Activated naive CD4-positive, alpha-beta T cell treated with anti-CD3 and anti-CD28 coated beads for 36 hours (primary cell): ENCODE measurements at regions of chr1 and their contacts with region 1.

Region 1: GRCh38 chr1:196660852-196661251 is 9.0 kb downstream of the CFH start:
- DNase-seq: no peak
- H3K4me3 Mint-ChIP-seq: no peak overlapping the region
- H3K27ac Mint-ChIP-seq: no peak overlapping the region
- H3K4me1 Mint-ChIP-seq: no peaks in the 10 kb centered on the region
- H3K27me3 Mint-ChIP-seq: no peaks in the 10 kb centered on the region

Region 2: GRCh38 chr1:196148367-196148970 is 512.4 kb before region 1 on chr1:
- CTCF ChIA-PET with region 1: interaction called, 18 read pairs
- intact Hi-C with region 1: loop called (anchors 1 kb)
- DNase-seq: no peak
- H3K4me3 Mint-ChIP-seq: no peak overlapping the region
- H3K27ac Mint-ChIP-seq: no peak overlapping the region
- H3K4me1 Mint-ChIP-seq: no peaks in the 10 kb centered on the region
- H3K27me3 Mint-ChIP-seq: no peaks in the 10 kb centered on the region

Region 3: GRCh38 chr1:196317535-196318522 is 343.0 kb before region 1 on chr1:
- CTCF ChIA-PET with region 1: no interaction called
- intact Hi-C with region 1: loop called (anchors 2 kb)
- DNase-seq: peak; percentile 4
- H3K4me3 Mint-ChIP-seq: no peak overlapping the region
- H3K27ac Mint-ChIP-seq: no peak overlapping the region
- H3K4me1 Mint-ChIP-seq: no peaks in the 10 kb centered on the region
- H3K27me3 Mint-ChIP-seq: no peaks in the 10 kb centered on the region

Region 4: GRCh38 chr1:196355206-196355786 is 305.6 kb before region 1 on chr1:
- CTCF ChIA-PET with region 1: no interaction called
- intact Hi-C with region 1: loop called (anchors 1 kb)
- DNase-seq: no peak
- H3K4me3 Mint-ChIP-seq: no peak overlapping the region
- H3K27ac Mint-ChIP-seq: no peak overlapping the region
- H3K4me1 Mint-ChIP-seq: no peaks in the 10 kb centered on the region
- H3K27me3 Mint-ChIP-seq: no peaks in the 10 kb centered on the region